Right ventricle myocardium inferior (tissue), 1 donor: ENCODE measurements at regions of chr12 and their contacts with region 1.

Region 1: DNA sequence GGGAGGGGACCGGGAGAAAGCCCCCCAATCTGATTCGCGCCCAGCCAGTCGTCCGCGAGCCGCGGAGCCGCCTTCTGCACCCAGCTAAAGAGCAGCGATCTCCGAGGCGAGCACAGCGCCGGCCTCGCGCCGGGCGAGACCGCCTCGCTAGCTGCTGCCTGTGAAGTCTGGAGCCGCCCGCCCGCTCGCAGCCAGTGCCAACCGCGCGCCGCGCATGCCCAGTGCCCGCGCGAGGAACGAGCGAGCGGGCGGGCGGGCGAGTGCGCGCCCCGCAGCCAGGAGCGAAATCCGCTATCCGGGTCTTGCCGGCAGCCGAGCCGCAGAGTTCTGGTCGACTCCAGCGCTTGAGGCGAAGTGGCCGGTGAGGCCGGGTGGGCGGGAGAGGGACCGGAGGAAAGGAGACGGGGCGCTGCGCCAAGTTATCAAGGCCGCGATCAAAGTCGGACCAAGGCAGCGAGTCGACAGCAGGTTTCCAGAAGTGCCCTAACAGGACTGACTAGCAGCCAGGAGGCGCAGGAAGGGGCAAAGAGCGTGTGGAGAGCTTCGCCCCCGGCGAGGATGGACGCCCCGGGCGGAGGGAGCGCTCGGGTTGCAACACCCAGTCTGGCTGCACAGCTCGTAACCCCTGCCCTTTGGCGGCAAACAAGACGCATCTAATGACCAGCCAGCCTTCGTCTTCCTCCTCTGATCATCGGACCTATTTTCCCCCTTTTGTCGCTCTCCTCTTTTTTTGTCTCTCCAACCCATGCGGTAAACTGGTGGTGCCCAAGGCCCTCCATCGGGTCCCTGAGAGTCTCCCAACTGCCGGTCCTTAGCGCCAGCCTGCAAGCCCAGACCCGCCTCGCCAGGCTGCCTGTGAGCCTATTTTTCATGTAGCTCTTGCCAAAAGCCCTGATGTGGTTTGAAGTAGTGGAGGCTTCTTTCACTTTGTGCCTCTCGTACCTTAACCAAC is at the start of gene EPS8:
- DNase-seq: peak; percentile 94
- ATAC-seq: peak; percentile 98
- total RNA-seq, gene EPS8: 20.7 TPM

Region 2: GRCh38 chr12:15856097-15856982 is 66.8 kb after region 1 on chr12:
- intact Hi-C with region 1: loop called (anchors 5 kb)
- DNase-seq: no peak
- ATAC-seq: no peak

Region 3: GRCh38 chr12:15882118-15882971 is 92.8 kb after region 1 on chr12 and contains the start of gene STRAP:
- intact Hi-C with region 1: no loop called
- DNase-seq: peak; percentile 98
- ATAC-seq: peak; percentile 98
- total RNA-seq, gene STRAP: 135 TPM